RWPE1 (cell line): ENCODE measurements at regions of chr17 and their contacts with region 1.

Region 1: GRCh38 chr17:80569924-80570323 is 25.3 kb downstream of the RPTOR start:
- DNase-seq: no peak
- H3K27ac ChIP-seq: no peak overlapping the region
- CTCF ChIP-seq: no peak

Region 2: GRCh38 chr17:80474231-80474960 is 95.5 kb before region 1 on chr17:
- CTCF ChIA-PET with region 1: interaction called, 12 read pairs
- POLR2A ChIA-PET with region 1: no interaction called
- DNase-seq: peak; percentile 49
- H3K27ac ChIP-seq: peak overlapping the region; percentile 19
- CTCF ChIP-seq: peak; percentile 33

Region 3: DNA sequence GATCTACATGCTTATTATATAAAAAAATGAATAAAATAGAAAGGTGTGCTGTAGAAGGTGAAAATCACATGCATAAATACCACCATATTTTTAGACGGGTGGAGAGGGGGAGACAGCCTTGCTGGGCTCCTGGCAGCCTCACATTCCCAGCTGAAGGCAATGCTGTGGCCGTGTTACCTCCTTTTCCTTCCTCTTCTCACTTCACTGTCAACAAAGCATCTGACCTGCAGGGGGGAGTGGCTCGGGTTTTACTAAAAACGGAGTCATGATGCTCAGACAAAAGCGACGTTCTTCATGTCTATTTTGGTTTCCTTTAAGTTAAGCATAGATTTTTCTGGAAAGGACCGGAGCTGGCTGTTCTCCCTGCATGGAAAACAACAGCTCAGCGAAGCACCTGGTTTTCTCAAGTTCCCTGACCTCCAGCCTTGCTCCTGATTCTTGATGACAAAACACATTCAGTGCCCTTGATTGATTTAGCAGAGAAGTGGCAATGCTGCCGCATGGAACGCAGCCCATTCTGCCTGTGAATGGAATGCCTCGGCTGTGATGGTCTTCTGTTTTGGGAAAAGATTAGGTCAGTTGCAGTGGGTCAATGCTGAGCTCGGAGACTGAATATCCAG is 30.8 kb before region 1 on chr17:
- CTCF ChIA-PET with region 1: no interaction called
- POLR2A ChIA-PET with region 1: interaction called, 11 read pairs
- DNase-seq: no peak
- H3K27ac ChIP-seq: no peak overlapping the region
- CTCF ChIP-seq: no peak